ENCODE measurements at regions of chr5 and their contacts with region 1.

Region 1: DNA sequence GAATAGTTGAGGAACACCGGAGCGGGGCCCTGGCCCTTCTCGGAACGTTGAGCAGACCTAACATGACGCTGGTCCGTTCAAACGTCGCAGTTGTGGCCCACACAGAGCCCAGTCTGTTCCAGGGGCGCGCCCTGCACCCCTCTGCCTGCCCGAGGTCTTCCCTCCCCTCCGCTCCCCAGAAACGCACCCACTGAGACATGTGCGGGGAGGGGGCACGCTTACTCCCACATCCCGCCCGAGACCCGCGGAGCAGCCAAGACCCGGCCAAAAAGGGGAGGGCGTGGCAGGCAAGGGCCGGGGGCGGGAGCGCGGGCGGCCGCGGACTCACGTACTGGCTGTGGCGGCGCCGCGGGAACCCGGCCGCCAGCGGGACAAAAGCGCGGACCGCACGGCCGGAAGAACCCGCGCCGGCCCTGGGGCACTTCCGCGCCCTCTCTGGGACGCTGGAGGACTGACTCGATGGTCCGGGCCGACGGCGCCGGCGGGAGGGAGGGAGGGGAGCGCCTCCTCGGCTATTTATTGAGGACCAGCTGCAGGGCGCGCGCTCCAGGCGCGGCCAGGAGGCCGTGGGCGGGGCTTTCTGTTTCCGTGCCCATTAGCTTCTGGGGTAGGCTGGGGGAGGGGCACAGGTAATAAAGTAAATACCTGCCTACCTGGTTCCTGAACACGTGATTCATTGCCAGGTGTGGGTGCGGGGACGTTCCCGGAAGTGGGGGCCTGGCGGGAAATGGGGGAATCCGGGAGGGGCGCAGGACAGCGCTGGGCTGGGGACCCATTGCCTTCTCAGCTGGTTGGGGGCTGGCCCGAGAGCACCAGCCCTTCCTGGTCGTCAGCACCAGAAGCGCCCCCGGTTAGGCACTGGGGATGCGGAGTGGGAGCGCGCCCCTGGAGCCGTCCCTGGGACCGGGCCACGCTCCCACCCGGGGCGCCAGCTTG is at the start of gene ZFP62:
- DNase-seq: peak; percentile 66 to 90 (median 82)
- ATAC-seq: peak; percentile 92
- H3K4me3 ChIP-seq: peak within 1 kb of the TSS; percentile 100
- H3K4me3 Mint-ChIP-seq: peak within 1 kb of the TSS; percentile 88 to 96 (median 91)
- H3K27ac ChIP-seq: peak within 1 kb of the TSS; percentile 83
- H3K27ac Mint-ChIP-seq: peak within 1 kb of the TSS; percentile 82 to 96 (median 94)
- H3K4me1 ChIP-seq: peaks cover 8 to 9% of the 10 kb centered on the region in 2 donors
- H3K4me1 Mint-ChIP-seq: peaks cover 19 to 32% (median 24%) of the 10 kb centered on the region in 7 donors
- H3K27me3 ChIP-seq: no peaks in the 10 kb centered on the region
- H3K27me3 Mint-ChIP-seq: peaks cover 0 to 10% (median 0%) of the 10 kb centered on the region in 5 donors
- total RNA-seq, gene ZFP62: 25.9 to 80.4 (median 36.4) TPM

Region 2: GRCh38 chr5:179720222-179720621 is 1140.9 kb before region 1 on chr5:
- CTCF ChIA-PET with region 1: no interaction called
- POLR2A ChIA-PET with region 1: no interaction called
- intact Hi-C with region 1: no loop called
- DNase-seq: no peak
- ATAC-seq: no peak
- H3K4me3 ChIP-seq: no peak overlapping the region
- H3K4me3 Mint-ChIP-seq: no peak overlapping the region
- H3K27ac ChIP-seq: no peak overlapping the region
- H3K27ac Mint-ChIP-seq: peak overlapping the region in 2 of 9 donors; percentile 19 to 39
- H3K4me1 ChIP-seq: no peaks in the 10 kb centered on the region
- H3K4me1 Mint-ChIP-seq: peaks cover 0 to 27% (median 9%) of the 10 kb centered on the region in 7 donors
- H3K27me3 ChIP-seq: no peaks in the 10 kb centered on the region
- H3K27me3 Mint-ChIP-seq: no peaks in the 10 kb centered on the region

Region 3: DNA sequence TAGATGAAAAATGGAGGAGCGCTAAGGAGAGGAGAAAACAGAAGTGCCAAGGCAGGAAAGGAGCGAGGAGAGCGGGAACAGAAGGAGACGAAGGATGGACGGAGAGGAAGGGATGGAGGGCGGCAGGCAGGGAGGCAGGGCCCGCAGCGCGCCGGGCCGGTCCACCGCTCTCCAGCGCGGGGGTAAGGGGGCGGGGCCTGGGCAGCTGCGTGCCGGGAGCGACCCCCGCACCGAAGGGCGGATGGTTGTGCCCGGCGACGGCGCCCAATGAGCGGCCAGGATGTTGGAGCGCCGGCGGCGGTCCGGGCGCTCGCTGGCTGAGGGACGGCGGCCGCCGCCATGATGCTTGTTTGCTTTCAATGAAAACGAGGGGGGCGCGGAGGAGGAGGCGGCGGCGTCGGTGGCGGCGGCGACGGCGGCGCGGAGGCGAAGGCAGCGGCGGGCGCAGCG is 367.1 kb before region 1 on chr5 and contains the start of gene CNOT6:
- CTCF ChIA-PET with region 1: no interaction called
- POLR2A ChIA-PET with region 1: no interaction called
- intact Hi-C with region 1: loop called (anchors 2 kb)
- DNase-seq: peak; percentile 91 to 98 (median 95)
- ATAC-seq: peak; percentile 98
- H3K4me3 ChIP-seq: peak within 1 kb of the TSS; percentile 83
- H3K4me3 Mint-ChIP-seq: peak within 1 kb of the TSS; percentile 85 to 99 (median 96)
- H3K27ac ChIP-seq: peak within 1 kb of the TSS; percentile 98
- H3K27ac Mint-ChIP-seq: peak within 1 kb of the TSS; percentile 84 to 98 (median 95)
- H3K4me1 ChIP-seq: peaks cover 10 to 27% of the 10 kb centered on the region in 2 donors
- H3K4me1 Mint-ChIP-seq: peaks cover 29 to 42% (median 35%) of the 10 kb centered on the region in 7 donors
- H3K27me3 ChIP-seq: no peaks in the 10 kb centered on the region
- H3K27me3 Mint-ChIP-seq: no peaks in the 10 kb centered on the region
- total RNA-seq, gene CNOT6: 22.8 to 41.9 (median 30.0) TPM

Region 4: DNA sequence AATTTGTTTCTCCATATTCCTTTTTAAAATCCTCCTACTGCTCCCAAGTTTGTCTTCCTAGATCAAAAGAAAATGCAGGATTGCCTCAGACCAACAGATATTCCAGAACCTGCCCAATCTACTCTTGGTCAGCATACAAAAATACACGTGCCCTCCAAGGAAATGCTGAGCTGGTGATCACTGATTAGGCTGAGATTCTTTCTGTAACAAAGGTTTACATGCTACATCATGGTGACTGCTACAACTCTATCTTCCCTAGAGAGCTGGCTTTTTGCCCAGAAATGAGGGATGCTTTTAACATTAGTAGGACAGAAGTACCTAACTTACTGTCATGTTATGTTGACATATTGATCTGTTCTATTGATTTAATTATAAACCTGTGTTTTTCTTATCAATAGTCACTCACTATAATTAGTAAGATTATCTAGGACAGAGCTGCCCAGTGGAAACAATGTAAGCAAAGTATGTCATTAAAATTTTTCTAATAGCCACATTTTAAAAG is 156.7 kb before region 1 on chr5:
- CTCF ChIA-PET with region 1: no interaction called
- POLR2A ChIA-PET with region 1: no interaction called
- intact Hi-C with region 1: no loop called
- DNase-seq: peak in 1 of 9 donors; percentile 7
- ATAC-seq: no peak
- H3K4me3 ChIP-seq: no peak overlapping the region
- H3K4me3 Mint-ChIP-seq: no peak overlapping the region
- H3K27ac ChIP-seq: no peak overlapping the region
- H3K27ac Mint-ChIP-seq: peak overlapping the region in 2 of 9 donors; percentile 9 to 32
- H3K4me1 ChIP-seq: no peaks in the 10 kb centered on the region
- H3K4me1 Mint-ChIP-seq: peaks cover 0 to 10% (median 8%) of the 10 kb centered on the region in 7 donors
- H3K27me3 ChIP-seq: no peaks in the 10 kb centered on the region
- H3K27me3 Mint-ChIP-seq: peaks cover 0 to 5% (median 0%) of the 10 kb centered on the region in 5 donors

Region 5: DNA sequence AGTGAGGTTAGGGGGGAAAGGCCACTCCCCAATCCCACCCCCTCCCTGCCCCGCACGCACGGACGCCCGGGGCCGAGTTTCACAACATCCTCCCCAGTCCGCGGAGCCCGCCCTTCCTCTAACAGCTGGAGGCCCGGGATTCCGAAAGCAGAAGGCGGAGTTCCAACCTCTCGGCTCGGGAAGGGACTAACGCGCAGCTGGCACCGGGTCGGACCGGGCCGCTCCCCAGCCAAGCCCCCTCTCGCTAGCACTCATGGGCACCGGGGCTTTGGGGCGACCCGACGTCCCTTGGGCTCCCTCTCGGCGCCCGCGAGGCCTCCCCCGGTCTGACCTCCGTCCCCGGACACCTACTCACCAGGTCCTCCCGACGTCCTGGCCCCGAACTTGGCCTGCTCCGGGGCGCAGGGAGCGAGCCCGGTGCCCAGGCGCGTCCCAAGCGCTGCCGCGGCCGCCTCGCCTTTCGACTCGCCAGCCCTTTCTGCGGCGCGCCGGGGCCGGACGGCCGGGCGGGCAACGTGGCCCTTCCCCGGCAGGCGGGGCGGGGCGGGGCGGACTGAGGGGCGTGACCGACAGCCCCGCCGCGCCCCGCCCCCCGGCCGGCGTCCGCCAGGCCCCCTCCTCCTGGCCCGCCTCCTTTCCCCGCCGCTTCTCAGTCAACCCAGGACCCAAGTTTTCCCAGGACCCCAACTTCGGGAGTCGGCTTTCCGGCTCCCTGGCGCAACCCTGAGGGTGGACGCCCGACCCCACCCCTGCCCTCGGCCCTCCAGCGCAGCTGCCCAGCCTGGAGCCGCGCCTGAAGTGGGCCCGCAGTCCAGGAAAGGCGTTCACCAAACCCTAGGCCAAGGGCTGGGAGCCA is 58.6 kb before region 1 on chr5 and contains the start of gene MGAT1:
- CTCF ChIA-PET with region 1: no interaction called
- POLR2A ChIA-PET with region 1: interaction called, 19 read pairs
- intact Hi-C with region 1: loop called (anchors 1 kb)
- DNase-seq: peak; percentile 47 to 91 (median 59)
- ATAC-seq: peak; percentile 80
- H3K4me3 ChIP-seq: peak within 1 kb of the TSS; percentile 77
- H3K4me3 Mint-ChIP-seq: peak within 1 kb of the TSS; percentile 89 to 99 (median 96)
- H3K27ac ChIP-seq: peak within 1 kb of the TSS; percentile 96
- H3K27ac Mint-ChIP-seq: peak within 1 kb of the TSS; percentile 91 to 100 (median 98)
- H3K4me1 ChIP-seq: peaks cover 75 to 84% of the 10 kb centered on the region in 2 donors
- H3K4me1 Mint-ChIP-seq: peaks cover 76 to 83% (median 79%) of the 10 kb centered on the region in 7 donors
- H3K27me3 ChIP-seq: no peaks in the 10 kb centered on the region
- H3K27me3 Mint-ChIP-seq: no peaks in the 10 kb centered on the region
- total RNA-seq, gene MGAT1: 101 to 206 (median 196) TPM

Region 6: DNA sequence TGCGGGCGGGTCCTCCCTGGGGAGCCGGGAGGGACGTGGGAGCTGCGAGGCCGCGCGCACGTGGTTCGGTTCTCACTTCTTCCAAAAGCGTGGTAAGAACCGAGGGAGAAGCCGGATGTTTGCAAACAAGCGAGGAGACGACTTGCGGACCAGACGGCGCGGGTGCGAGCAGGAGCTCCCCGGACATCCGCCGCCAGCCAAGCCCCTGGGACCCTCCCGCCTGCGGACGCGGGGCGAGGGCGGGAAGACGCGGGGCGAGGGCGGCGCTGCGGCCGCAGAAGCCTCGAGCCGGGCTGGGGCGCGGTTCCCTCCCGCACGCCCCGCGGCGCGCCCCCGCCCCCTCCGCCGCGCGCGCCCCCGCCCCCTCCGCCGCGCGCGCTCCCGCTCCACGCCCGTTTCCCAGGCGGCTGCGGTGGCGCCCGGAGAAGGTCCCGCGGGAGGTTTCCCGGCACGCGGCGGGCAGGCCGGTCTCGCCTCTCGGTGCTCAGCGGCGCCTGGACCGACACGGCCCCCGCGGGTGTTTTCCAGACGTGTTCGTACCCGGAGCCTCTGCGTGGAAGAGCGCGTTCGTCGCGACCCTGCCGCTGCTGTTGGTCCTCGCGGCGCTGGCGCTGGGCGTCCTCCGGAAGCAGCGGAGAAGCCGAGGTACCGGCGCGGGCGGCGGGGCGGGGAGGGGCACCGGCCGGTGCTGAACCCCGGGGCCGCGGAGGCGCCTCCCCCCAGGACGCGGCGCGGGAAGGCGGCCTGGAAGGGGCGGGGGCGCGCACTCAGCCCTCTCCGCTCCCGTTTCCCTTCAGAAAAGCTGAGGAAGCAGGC is 191.7 kb after region 1 on chr5:
- CTCF ChIA-PET with region 1: no interaction called
- POLR2A ChIA-PET with region 1: no interaction called
- intact Hi-C with region 1: loop called in 1 of 2 experiments (anchors 10 kb)
- DNase-seq: peak in 4 of 9 donors; percentile 9 to 16 (median 12)
- ATAC-seq: peak; percentile 23
- H3K4me3 ChIP-seq: peak overlapping the region; percentile 22
- H3K4me3 Mint-ChIP-seq: peak overlapping the region; percentile 75 to 92 (median 80)
- H3K27ac ChIP-seq: no peak overlapping the region
- H3K27ac Mint-ChIP-seq: no peak overlapping the region
- H3K4me1 ChIP-seq: peaks cover 4 to 8% of the 10 kb centered on the region in 2 donors
- H3K4me1 Mint-ChIP-seq: peaks cover 10 to 27% (median 21%) of the 10 kb centered on the region in 7 donors
- H3K27me3 ChIP-seq: peaks cover 0 to 18% of the 10 kb centered on the region in 2 donors
- H3K27me3 Mint-ChIP-seq: peaks cover 71 to 82% (median 79%) of the 10 kb centered on the region in 5 donors

Region 7: GRCh38 chr5:181181650-181182565 is 320.8 kb after region 1 on chr5:
- CTCF ChIA-PET with region 1: no interaction called
- POLR2A ChIA-PET with region 1: no interaction called
- intact Hi-C with region 1: loop called (anchors 1 kb)
- DNase-seq: peak in 7 of 9 donors; percentile 38 to 72 (median 68)
- ATAC-seq: peak; percentile 81
- H3K4me3 ChIP-seq: no peak overlapping the region
- H3K4me3 Mint-ChIP-seq: peak overlapping the region; percentile 11 to 95 (median 50)
- H3K27ac ChIP-seq: no peak overlapping the region
- H3K27ac Mint-ChIP-seq: peak overlapping the region in 8 of 9 donors; percentile 2 to 92 (median 87)
- H3K4me1 ChIP-seq: peaks cover 3 to 8% of the 10 kb centered on the region in 2 donors
- H3K4me1 Mint-ChIP-seq: peaks cover 6 to 44% (median 31%) of the 10 kb centered on the region in 7 donors
- H3K27me3 ChIP-seq: no peaks in the 10 kb centered on the region
- H3K27me3 Mint-ChIP-seq: peaks cover 0 to 17% (median 0%) of the 10 kb centered on the region in 5 donors

Region 8: DNA sequence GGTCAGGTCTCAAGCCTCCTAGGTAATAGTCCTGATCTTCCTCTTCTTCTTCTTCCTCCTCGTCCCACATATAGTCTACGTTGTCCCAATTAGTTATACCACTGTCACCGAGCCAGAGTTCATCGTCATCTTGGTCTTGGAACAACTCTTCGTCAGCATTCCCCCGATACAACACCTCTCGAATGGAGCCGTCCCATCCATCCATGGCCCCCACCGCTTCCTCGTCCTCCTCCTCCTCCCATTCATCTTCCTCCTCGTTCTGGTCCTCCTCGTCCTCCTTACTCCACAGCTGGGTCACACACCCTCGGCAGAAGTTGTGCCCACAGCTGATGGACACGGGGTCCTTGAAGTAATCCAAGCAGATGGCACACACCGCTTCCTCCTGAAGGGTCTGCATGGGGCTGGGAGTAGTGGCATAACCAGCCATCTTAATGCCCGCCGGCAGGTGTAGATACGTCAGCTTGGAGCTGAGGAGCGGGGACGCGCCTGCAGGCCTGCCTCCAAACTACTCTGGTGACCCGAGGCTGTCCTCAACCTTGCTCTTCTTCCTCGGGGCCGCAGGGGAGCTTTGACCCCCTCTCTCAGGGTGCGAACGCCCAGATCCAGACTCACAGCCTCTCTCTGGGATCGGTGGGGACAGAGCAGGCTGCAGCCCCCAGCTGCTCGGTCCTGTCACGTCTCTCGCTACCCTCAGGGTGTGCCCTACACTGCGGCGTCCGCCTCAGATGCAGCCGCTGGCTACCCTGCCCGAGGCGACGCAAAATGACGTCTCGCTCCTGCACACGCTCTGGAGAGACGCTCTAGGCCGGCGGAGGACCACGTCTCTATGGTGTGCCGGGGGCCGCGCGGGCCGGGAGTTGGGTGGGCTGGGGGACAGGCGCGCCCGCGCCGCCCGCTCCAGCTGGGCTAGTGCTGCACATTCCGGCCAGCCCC is 399.5 kb after region 1 on chr5 and contains the start of gene TRIM52:
- CTCF ChIA-PET with region 1: no interaction called
- POLR2A ChIA-PET with region 1: no interaction called
- intact Hi-C with region 1: loop called (anchors 1 to 2 kb)
- DNase-seq: peak; percentile 79 to 91 (median 90)
- ATAC-seq: peak; percentile 93
- H3K4me3 ChIP-seq: peak within 1 kb of the TSS; percentile 93
- H3K4me3 Mint-ChIP-seq: peak within 1 kb of the TSS; percentile 94 to 100 (median 98)
- H3K27ac ChIP-seq: peak within 1 kb of the TSS; percentile 97
- H3K27ac Mint-ChIP-seq: peak within 1 kb of the TSS; percentile 95 to 99 (median 98)
- H3K4me1 ChIP-seq: peaks cover 31 to 39% of the 10 kb centered on the region in 2 donors
- H3K4me1 Mint-ChIP-seq: peaks cover 34 to 60% (median 56%) of the 10 kb centered on the region in 7 donors
- H3K27me3 ChIP-seq: no peaks in the 10 kb centered on the region
- H3K27me3 Mint-ChIP-seq: no peaks in the 10 kb centered on the region
- total RNA-seq, gene TRIM52: 31.4 to 71.6 (median 35.7) TPM